ENCODE measurements at regions of chr5 and their contacts with region 1.

Region 1: GRCh38 chr5:132495667-132496190 is 5.2 kb upstream of the IRF1 start:
- DNase-seq: peak; percentile 87 to 94 (median 91)
- H3K4me3 ChIP-seq: peak overlapping the region in 6 of 7 experiments; percentile 38 to 91 (median 78)
- H3K27ac ChIP-seq: peak overlapping the region; percentile 41 to 86
- H3K4me1 ChIP-seq: peaks cover 15 to 66% (median 60%) of the 10 kb centered on the region in 4 experiments
- H3K27me3 ChIP-seq: no peaks in the 10 kb centered on the region

Region 2: GRCh38 chr5:131968396-131968954 is 527.3 kb before region 1 on chr5:
- CTCF ChIA-PET with region 1: no interaction called
- POLR2A ChIA-PET with region 1: no interaction called
- DNase-seq: peak in 2 of 3 donors; percentile 17 to 27
- H3K4me3 ChIP-seq: no peak overlapping the region
- H3K27ac ChIP-seq: no peak overlapping the region
- H3K4me1 ChIP-seq: no peaks in the 10 kb centered on the region
- H3K27me3 ChIP-seq: no peaks in the 10 kb centered on the region

Region 3: DNA sequence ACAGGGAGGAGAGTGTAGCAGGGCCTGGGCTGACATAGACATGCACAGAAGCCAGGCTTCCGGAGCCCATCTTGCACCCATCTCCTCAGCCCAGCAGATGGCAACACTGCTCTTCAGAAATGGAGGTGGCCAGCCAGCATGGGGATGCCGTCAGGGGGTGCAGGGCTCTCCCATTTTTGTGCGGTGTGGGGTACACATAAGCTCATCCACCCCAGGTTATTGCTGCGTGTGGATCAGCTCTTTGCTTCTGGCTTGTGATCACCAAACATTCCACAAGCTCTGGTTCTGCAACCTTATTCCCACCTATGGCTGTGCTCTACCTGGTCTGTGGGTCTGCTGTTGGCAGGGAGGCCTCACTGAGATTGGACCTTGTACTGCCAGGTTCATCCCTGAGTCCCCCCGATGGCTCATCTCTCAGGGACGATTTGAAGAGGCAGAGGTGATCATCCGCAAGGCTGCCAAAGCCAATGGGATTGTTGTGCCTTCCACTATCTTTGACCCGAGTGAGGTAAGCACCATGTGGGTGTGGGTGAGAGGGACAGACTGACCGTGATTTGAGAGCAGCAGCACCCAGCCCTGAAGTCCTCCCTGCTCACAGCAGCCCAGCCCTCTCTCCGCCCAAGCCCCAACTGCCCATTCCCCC is 109.0 kb before region 1 on chr5:
- CTCF ChIA-PET with region 1: interaction called, 375 read pairs
- POLR2A ChIA-PET with region 1: interaction called, 4 read pairs
- DNase-seq: peak; percentile 74 to 89 (median 87)
- H3K4me3 ChIP-seq: no peak overlapping the region
- H3K27ac ChIP-seq: no peak overlapping the region
- H3K4me1 ChIP-seq: peaks cover 0 to 50% (median 31%) of the 10 kb centered on the region in 4 experiments
- H3K27me3 ChIP-seq: no peaks in the 10 kb centered on the region

Region 4: DNA sequence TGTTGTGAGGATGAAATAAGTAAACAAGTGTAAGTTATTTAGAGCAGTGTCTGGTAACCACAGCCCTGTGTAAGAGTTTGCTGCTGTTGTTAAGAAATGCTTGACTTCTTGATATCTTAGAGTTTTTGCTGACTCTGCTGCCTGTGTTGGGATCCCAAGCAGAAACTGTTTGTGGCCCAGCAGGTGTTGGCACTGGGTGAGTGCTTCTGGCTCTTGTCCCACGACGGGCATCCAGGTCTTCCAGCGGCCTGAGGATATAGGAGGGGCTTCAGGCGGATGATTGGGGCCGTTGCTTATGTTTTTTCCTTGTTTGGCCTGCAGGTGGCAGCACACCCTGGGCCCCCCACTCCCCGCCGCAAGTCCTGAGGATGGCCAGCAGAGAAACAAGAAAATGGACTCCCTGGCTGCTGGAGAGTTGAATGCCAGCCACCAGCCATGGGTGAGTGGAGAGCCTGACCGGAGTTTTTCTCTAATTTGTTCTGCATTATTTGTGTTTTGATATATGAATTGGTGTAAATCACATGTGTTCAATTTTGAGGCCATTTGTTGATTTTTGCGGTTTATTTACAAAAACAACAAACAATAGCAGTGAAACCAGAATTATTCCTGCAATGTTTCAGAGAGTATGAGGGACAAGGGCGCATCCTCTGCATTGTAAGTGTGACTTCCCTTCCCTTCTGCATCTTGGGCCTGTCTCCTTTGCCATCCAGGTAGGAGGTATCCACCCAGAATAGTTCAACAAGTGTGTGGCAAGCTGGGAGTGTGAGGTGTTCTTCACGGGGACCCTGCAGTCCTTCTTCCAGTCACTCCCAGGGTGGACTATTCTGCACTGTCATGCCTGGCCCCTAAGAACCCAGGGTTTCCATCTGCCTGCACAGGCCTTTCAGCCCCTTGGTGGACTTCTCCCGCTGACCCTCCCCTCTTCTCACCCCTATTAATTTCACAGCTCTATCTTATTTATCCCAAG is 75.9 kb before region 1 on chr5:
- CTCF ChIA-PET with region 1: interaction called, 56 read pairs
- POLR2A ChIA-PET with region 1: interaction called, 21 read pairs
- DNase-seq: peak; percentile 74 to 83 (median 81)
- H3K4me3 ChIP-seq: peak overlapping the region in 4 of 7 experiments; percentile 27 to 58 (median 39)
- H3K27ac ChIP-seq: peak overlapping the region; percentile 71 to 80
- H3K4me1 ChIP-seq: peaks cover 41 to 97% (median 83%) of the 10 kb centered on the region in 4 experiments
- H3K27me3 ChIP-seq: no peaks in the 10 kb centered on the region

Region 5: GRCh38 chr5:132466433-132467286 is 29.1 kb before region 1 on chr5:
- CTCF ChIA-PET with region 1: interaction called, 471 read pairs
- POLR2A ChIA-PET with region 1: interaction called, 31 read pairs
- DNase-seq: peak; percentile 88 to 99 (median 98)
- H3K4me3 ChIP-seq: peak overlapping the region in 4 of 7 experiments; percentile 29 to 66 (median 40)
- H3K27ac ChIP-seq: peak overlapping the region; percentile 67 to 69
- H3K4me1 ChIP-seq: peaks cover 45 to 93% (median 87%) of the 10 kb centered on the region in 4 experiments
- H3K27me3 ChIP-seq: no peaks in the 10 kb centered on the region

Region 6: DNA sequence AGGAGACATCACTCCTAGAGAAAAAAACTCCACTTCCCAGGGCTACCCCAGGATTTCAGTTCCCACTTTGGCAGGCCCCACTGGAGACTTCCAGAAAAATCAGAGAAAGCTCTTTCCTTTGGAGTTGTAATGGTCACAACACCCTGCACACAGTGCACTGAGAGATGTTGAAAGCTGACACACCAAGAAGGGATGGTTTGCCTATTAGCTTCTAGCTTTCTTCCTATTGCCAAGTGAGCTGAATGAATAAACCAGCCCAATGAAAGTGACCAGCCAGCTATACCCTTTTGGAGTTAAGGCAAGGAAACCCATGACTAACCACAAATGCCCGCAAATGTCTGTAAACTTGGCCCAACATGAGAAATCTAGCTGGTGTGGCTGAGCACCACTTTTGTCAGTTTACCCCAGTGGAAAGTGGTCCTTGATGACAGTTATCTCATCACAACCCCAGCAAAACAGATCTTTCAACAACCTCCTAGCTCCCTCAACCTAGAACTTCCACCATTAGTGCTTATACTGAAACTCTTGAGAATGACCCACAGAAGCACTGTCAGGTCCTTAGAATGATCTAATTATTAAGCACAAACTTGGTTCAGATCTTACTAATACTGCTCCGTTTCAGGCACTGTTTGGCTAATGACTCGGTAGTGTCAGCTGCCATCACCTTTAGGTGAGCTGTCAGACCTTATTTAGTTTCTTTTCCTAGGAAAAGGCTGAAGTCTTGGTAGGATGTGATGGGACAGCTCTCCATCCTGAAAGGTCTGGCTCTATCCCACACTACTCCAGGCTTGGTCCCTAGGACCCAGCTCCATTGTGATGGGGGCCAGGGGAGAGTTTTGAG is 16.4 kb before region 1 on chr5:
- CTCF ChIA-PET with region 1: interaction called, 471 read pairs
- POLR2A ChIA-PET with region 1: interaction called, 67 read pairs
- DNase-seq: peak in 1 of 3 donors; percentile 42
- H3K4me3 ChIP-seq: no peak overlapping the region
- H3K27ac ChIP-seq: no peak overlapping the region
- H3K4me1 ChIP-seq: peaks cover 3 to 40% (median 34%) of the 10 kb centered on the region in 4 experiments
- H3K27me3 ChIP-seq: no peaks in the 10 kb centered on the region

Region 7: DNA sequence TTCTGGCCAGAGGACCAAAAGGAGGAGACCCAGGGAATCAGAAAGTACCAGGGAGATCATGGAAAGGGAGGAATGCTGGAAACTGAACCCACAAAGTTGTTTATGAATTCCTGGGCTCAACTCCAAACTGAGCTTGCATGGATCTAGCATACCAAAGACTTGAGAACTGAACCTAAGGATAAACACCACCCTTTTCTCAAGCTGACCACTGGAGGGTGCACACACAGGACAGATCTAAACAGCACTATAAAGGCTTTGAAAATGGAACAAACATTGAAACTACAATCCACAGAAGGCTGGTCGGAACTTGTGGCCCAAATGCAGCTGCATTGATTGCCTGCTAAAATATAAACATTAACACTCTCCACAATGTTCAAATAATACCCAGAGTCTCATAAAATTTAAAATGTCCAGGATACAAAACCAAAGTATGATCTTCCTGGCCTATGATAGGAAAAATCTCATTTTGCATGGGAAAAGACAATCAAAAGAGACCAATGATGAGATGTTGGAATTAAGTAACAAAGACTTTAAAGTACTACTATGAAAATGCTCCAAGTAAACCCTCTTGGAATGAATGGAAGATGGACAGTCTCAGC is 10.5 kb after region 1 on chr5:
- CTCF ChIA-PET with region 1: interaction called, 71 read pairs
- POLR2A ChIA-PET with region 1: interaction called, 17 read pairs
- DNase-seq: peak; percentile 50 to 76 (median 76)
- H3K4me3 ChIP-seq: no peak overlapping the region
- H3K27ac ChIP-seq: no peak overlapping the region
- H3K4me1 ChIP-seq: peaks cover 0 to 14% (median 8%) of the 10 kb centered on the region in 4 experiments
- H3K27me3 ChIP-seq: no peaks in the 10 kb centered on the region